PC-9 (cell line): ENCODE measurements at regions of chr7 and their contacts with region 1.

Region 1: DNA sequence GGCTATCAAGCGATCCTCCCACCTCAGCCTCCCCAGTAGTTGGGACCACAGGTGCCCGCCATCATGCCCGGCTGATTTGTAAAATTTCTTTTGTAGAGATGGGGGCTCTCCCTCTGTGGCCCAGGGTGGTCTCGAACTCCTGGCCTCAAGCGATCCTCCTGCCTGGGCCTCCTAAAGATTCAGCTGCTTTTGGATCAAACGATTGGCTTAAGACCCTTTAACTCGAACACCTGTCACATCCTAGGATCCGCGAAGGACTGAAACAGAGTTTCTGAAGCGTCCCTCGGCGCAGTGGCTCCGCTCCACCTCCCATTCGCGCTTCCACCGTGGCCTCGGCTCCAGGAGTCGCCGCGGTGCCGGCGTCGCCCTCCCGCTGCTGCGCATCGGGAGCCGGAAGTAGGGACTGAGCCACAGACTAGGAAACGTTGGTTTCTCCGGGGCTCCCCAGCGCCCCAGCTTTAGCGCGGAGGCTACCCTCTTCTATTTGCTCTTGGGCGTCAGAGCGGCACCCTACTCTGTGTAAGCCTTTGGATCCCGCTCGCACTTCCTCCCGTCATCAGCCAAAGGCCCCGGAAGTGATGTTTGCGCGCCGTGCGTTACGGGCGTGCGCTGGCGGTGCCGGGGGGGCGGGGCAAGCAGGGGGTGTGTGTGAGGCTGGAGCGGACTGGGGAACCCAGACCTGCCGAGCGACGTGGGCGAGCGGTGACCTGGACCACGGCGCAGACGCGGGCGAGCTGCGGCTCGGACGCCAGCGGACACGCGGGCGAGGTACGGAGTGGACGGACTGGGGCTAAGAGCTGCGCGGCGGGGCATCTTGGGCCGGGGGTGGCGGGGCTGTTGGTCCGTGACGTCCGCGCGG is 53.0 kb downstream of the KCTD7 start:
- DNase-seq: peak; percentile 91 to 96
- H3K4me3 ChIP-seq: peak overlapping the region; percentile 89
- H3K27ac ChIP-seq: peak overlapping the region; percentile 77
- H3K4me1 ChIP-seq: peaks cover 11% of the 10 kb centered on the region
- H3K27me3 ChIP-seq: no peaks in the 10 kb centered on the region
- CTCF ChIP-seq: no peak

Region 2: GRCh38 chr7:66654123-66654732 is 27.5 kb before region 1 on chr7:
- CTCF ChIA-PET with region 1: no interaction called
- POLR2A ChIA-PET with region 1: interaction called, 5 read pairs
- intact Hi-C with region 1: loop called (anchors 1 kb)
- DNase-seq: peak; percentile 96 to 99
- H3K4me3 ChIP-seq: peak overlapping the region; percentile 64
- H3K27ac ChIP-seq: peak overlapping the region; percentile 92
- H3K4me1 ChIP-seq: peaks cover 19% of the 10 kb centered on the region
- H3K27me3 ChIP-seq: no peaks in the 10 kb centered on the region
- CTCF ChIP-seq: peak; percentile 32; the same call in 1 of the 2 replicates